Activated T-helper 1 cell treated with anti-CD3 and anti-CD28 coated beads, Interleukin-12 subunit alpha, Interleukin-12 subunit beta, Interleukin-2, Interleukin-4 antibody, amounts not matched to agents 30 ng/mL and 10 ng/mL and 1 ng/mL, durations not matched to agents 14 hours and 24 hours and 36 hours (primary cell): ENCODE measurements at regions of chr5 and their contacts with region 1.

Region 1: DNA sequence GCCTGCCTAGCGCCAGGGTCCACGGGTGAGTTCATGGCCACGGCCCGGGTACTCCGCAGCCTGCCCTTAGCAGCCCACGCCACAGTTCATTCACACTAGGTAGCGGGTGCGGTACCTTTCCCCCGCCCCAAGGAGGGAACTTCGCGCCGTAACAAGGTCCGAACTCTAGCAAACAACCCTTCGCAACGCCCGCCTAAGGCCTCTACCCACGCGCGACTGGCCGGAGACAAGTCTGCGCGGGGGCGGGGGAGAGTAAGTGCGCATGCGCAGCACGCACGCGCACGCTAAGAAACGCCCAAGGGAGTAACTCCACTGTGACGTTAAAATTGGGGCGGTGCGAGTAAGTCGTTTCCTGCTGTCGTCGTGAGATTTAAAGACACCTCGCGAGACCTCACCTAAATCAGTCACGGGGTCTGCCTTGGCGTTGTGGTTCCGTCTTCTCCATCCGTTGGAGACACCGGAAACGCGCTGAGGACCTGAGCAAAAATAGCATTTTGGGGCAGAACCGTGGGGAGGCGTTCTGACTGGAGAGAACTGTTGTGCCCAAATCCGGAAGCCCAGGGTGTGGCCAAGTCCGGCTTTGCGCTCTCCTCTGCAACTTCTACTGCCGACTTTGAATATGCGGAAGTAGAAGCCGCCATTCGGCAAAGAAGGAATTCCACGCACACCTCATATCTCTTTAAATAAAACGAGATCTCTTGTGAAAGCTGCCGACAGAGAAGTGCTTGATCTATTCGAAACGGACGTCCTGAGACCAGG is at the start of gene RAPGEF6:
- DNase-seq: peak; percentile 97
- H3K4me3 Mint-ChIP-seq: peak within 1 kb of the TSS; percentile 98
- H3K27ac Mint-ChIP-seq: peak within 1 kb of the TSS; percentile 97
- H3K4me1 Mint-ChIP-seq: peaks cover 33% of the 10 kb centered on the region
- H3K27me3 Mint-ChIP-seq: no peaks in the 10 kb centered on the region
- total RNA-seq, gene RAPGEF6: 36.7 and 42.8 TPM in 2 replicates

Region 2: DNA sequence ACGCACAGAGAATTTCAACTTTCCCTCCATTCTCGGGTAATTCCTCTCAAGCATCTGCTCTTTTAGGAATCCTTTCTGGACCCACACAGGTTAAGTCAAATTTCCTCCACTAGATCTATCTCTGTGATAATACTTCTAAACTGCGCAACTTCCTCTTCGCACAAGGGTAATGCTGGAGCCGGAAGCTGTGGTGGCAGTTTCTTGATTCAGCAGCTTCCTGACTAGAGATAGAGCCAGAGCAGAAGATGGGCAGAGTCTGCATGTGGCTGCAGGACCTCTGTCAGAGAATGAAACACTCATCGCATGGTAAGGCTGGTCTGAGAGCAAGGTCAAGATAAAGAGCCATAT is 382.4 kb before region 1 on chr5:
- intact Hi-C with region 1: loop called (anchors 5 kb)
- DNase-seq: peak; percentile 78
- H3K4me3 Mint-ChIP-seq: peak overlapping the region; percentile 89
- H3K27ac Mint-ChIP-seq: peak overlapping the region; percentile 99
- H3K4me1 Mint-ChIP-seq: peaks cover 69% of the 10 kb centered on the region
- H3K27me3 Mint-ChIP-seq: no peaks in the 10 kb centered on the region

Region 3: DNA sequence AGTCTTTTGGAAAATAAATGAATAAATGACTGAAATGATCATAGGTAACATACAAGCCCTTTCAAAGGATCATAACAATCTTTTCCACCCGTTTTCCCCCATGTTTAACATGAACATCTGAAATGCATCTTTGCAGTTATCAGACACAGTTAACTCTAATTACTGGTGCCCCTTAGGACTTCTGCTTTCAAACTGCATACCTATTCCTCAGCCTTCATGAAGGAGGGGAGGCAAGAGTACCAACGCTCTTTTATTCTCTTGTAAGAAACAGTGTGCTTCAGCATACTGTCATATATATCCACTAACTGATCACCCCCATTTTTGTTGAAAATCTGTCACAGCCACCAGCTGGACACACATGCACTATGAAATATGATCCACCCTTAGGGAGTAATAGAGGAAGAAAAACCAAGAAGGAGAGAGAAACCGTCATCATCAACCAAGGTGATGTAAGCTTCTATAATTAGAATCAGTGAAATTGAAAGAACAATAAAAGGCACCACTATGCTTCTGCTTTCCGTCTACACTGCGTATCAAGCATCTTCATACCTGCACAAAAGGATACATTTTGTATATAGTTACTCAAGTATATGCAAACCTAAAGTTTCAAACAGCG is 98.9 kb before region 1 on chr5:
- intact Hi-C with region 1: loop called (anchors 2 kb)
- DNase-seq: no peak
- H3K4me3 Mint-ChIP-seq: peak overlapping the region; percentile 46
- H3K27ac Mint-ChIP-seq: peak overlapping the region; percentile 64
- H3K4me1 Mint-ChIP-seq: peaks cover 81% of the 10 kb centered on the region
- H3K27me3 Mint-ChIP-seq: no peaks in the 10 kb centered on the region

Region 4: DNA sequence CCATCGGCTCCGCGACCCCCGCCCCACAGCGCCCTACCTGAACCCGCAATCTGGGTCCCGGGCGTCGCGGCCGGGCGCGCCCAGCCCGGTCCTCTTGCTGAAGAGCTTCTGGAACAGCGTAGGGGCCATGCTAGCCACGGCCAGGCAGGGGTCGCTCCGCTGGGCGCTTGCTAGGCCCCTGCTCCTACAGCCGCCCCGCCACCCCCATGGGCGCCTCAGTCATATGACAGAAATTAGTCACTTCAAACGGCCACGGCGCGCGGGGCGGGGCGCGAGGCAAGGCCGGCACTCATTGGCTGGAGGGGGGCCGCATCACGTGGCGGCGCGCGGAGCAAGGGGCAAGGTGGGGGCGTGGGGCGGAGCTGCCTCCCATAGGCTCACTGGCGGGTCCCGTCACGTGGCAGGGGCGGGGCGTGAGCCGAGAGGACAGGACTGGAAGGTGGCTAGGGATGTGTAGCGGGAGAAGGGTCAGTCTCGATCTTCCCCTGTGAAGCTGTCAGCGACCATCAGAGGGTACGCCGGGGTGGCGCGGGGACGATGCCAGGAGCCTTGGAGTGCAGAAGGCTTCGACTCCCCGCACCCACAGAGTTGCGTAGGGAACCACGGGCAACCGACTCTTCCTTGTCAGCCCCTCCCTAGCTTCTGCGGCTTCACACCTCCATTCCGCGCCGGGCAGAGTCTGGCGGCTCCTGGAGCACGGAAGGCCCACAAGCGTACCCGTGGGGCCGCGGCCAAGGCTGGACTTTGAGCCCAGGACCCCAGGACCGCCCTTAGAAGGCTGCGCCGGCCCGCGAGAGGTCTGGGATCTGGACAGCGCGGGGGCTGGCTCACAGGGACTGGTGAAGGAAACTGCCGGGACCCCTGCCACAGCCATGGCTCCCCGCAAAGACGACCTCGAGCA is 161.9 kb after region 1 on chr5 and contains the start of gene FNIP1:
- intact Hi-C with region 1: loop called (anchors 1 kb)
- DNase-seq: peak; percentile 98
- H3K4me3 Mint-ChIP-seq: peak within 1 kb of the TSS; percentile 97
- H3K27ac Mint-ChIP-seq: peak within 1 kb of the TSS; percentile 93
- H3K4me1 Mint-ChIP-seq: peaks cover 21% of the 10 kb centered on the region
- H3K27me3 Mint-ChIP-seq: peaks cover under 1% of the 10 kb centered on the region
- total RNA-seq, gene FNIP1: 18.8 and 19.0 TPM in 2 replicates

Region 5: GRCh38 chr5:132103332-132103951 is 468.3 kb after region 1 on chr5:
- intact Hi-C with region 1: loop called (anchors 1 kb)
- DNase-seq: peak; percentile 78
- H3K4me3 Mint-ChIP-seq: peak overlapping the region; percentile 70
- H3K27ac Mint-ChIP-seq: peak overlapping the region; percentile 100
- H3K4me1 Mint-ChIP-seq: peaks cover 91% of the 10 kb centered on the region
- H3K27me3 Mint-ChIP-seq: no peaks in the 10 kb centered on the region

Region 6: GRCh38 chr5:133051580-133052332 is 1416.6 kb after region 1 on chr5 and contains the start of gene HSPA4:
- intact Hi-C with region 1: loop called (anchors 10 kb)
- DNase-seq: peak; percentile 96
- H3K4me3 Mint-ChIP-seq: peak within 1 kb of the TSS; percentile 96
- H3K27ac Mint-ChIP-seq: peak within 1 kb of the TSS; percentile 100
- H3K4me1 Mint-ChIP-seq: peaks cover 46% of the 10 kb centered on the region
- H3K27me3 Mint-ChIP-seq: peaks cover 2% of the 10 kb centered on the region
- total RNA-seq, gene HSPA4: 244 and 247 TPM in 2 replicates